Activated naive CD4-positive, alpha-beta T cell treated with anti-CD3 and anti-CD28 coated beads for 36 hours (primary cell): ENCODE measurements at regions of chr5 and their contacts with region 1.

Region 1: GRCh38 chr5:91162534-91163381 is 220.4 kb downstream of the ARRDC3 start:
- DNase-seq: peak; percentile 89
- H3K4me3 Mint-ChIP-seq: no peak overlapping the region
- H3K27ac Mint-ChIP-seq: peak overlapping the region; percentile 65
- H3K4me1 Mint-ChIP-seq: peaks cover 22% of the 10 kb centered on the region
- H3K27me3 Mint-ChIP-seq: no peaks in the 10 kb centered on the region

Region 2: GRCh38 chr5:90409318-90410177 is 753.2 kb before region 1 on chr5 and contains the start of gene CETN3:
- CTCF ChIA-PET with region 1: no interaction called
- intact Hi-C with region 1: loop called (anchors 10 kb)
- DNase-seq: peak; percentile 93
- H3K4me3 Mint-ChIP-seq: no peak within 1 kb of the TSS
- H3K27ac Mint-ChIP-seq: no peak within 1 kb of the TSS
- H3K4me1 Mint-ChIP-seq: peaks cover 15% of the 10 kb centered on the region
- H3K27me3 Mint-ChIP-seq: no peaks in the 10 kb centered on the region
- total RNA-seq, gene CETN3: 41.9 to 45.3 TPM

Region 3: GRCh38 chr5:90675222-90675621 is 487.5 kb before region 1 on chr5:
- CTCF ChIA-PET with region 1: no interaction called
- intact Hi-C with region 1: no loop called
- DNase-seq: no peak
- H3K4me3 Mint-ChIP-seq: no peak overlapping the region
- H3K27ac Mint-ChIP-seq: no peak overlapping the region
- H3K4me1 Mint-ChIP-seq: no peaks in the 10 kb centered on the region
- H3K27me3 Mint-ChIP-seq: peaks cover 4% of the 10 kb centered on the region

Region 4: DNA sequence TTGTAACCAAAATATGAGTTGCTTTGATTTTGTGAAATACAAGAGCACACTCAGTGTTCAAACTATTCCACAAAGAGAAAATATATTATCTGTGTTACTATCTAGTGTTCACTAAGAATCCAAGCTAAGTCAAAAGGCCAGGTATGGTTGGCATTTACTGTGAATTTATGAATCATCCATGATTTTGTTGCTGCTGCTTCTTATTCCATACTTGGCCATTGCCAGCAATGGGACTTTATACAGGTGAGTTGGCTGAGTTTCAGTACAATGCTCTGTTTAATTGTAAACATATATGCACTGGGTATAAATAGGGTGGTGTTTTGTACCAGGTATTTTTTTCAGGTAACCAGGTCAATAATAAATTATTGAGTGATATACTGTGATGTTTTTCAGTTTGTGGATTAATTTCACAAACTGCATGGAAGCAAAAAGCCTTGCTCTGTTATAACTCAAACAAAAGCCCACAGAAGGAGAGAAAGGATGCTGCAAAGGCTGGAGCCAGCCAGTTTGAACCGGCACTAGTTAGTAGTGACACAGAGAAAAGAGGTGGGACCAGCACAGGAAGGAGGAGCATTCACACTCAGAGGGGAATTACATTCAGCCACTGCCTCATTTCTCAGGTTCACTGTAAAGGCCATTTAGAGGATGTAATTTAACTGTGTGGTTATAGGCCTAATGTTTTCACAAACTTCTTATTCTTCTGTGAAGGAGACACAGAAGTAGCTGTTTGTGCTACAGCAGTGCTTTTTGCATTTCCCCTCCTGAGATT is 222.3 kb before region 1 on chr5:
- CTCF ChIA-PET with region 1: no interaction called
- intact Hi-C with region 1: loop called (anchors 1 kb)
- DNase-seq: peak; percentile 88
- H3K4me3 Mint-ChIP-seq: no peak overlapping the region
- H3K27ac Mint-ChIP-seq: peak overlapping the region; percentile 73
- H3K4me1 Mint-ChIP-seq: peaks cover 13% of the 10 kb centered on the region
- H3K27me3 Mint-ChIP-seq: no peaks in the 10 kb centered on the region

Region 5: DNA sequence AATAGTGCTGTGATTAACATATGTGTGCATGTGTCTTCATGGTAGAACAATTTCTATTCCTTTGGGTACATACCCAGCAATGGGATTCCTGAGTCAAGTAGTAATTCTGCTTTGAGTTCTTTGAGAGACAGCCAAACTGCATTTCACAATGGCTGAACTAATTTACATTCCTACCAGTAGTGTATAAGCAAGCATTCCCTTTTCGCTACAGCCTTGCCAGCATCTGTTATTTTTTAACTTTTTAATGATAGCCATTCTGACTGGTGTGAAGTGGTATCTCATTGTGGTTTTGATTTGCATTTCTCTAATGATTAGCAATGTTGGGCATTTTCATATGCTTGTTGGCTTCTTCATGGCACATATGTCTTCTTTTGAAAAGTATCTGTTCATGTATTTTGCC is 88.1 kb before region 1 on chr5:
- CTCF ChIA-PET with region 1: no interaction called
- intact Hi-C with region 1: loop called (anchors 5 kb)
- DNase-seq: no peak
- H3K4me3 Mint-ChIP-seq: no peak overlapping the region
- H3K27ac Mint-ChIP-seq: no peak overlapping the region
- H3K4me1 Mint-ChIP-seq: peaks cover 18% of the 10 kb centered on the region
- H3K27me3 Mint-ChIP-seq: peaks cover 20% of the 10 kb centered on the region

Region 6: GRCh38 chr5:91126448-91126847 is 36.3 kb before region 1 on chr5:
- CTCF ChIA-PET with region 1: no interaction called
- intact Hi-C with region 1: no loop called
- DNase-seq: no peak
- H3K4me3 Mint-ChIP-seq: no peak overlapping the region
- H3K27ac Mint-ChIP-seq: no peak overlapping the region
- H3K4me1 Mint-ChIP-seq: no peaks in the 10 kb centered on the region
- H3K27me3 Mint-ChIP-seq: no peaks in the 10 kb centered on the region

Region 7: GRCh38 chr5:91183737-91184136 is 21.0 kb after region 1 on chr5:
- CTCF ChIA-PET with region 1: no interaction called
- intact Hi-C with region 1: loop called (anchors 1 kb)
- DNase-seq: no peak
- H3K4me3 Mint-ChIP-seq: no peak overlapping the region
- H3K27ac Mint-ChIP-seq: no peak overlapping the region
- H3K4me1 Mint-ChIP-seq: peaks cover 9% of the 10 kb centered on the region
- H3K27me3 Mint-ChIP-seq: peaks cover 10% of the 10 kb centered on the region

Region 8: DNA sequence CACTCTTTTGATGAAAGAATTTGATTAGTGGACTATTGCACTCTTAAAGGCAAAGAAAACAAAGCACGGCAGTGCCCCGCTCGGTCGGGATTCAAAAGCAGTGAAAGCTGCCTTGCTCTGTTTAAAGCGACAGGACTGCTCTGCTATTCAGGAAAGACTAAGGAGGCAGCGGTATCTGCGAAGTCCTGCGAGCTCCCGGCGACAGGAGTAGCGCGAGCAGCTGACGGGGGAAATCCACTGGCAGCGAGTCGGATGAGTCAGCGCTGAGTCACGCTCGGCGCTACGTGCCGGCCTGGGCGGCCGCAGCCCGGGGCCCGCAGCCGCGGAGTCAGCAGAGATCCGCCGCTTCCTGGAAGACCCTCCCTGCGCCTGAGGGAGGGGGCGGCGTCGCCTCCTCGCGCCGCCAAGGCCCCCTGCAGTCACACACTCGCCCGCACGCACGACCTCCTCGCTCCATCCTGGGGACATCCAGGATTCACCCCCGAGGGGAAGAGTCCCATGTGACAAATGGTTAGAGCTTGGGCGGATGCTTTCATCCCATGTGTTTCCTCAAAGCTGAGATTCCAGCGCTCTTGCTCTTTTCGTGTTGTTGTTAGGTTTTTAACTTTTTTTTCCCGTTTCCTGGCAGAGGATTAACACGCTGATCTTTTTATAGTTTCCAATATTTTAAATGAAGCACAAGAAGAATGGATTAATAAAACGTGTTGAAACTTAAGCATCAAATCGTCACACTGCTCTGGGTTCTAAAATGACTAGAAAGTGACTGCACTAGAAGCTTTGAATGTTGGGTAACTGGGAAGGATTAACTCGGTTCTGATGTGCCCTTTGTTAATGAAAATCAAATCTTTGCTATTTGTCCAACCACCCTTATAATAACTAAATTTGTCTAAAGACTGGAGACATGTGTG is 117.9 kb after region 1 on chr5:
- CTCF ChIA-PET with region 1: no interaction called
- intact Hi-C with region 1: loop called (anchors 1 kb)
- DNase-seq: peak; percentile 94
- H3K4me3 Mint-ChIP-seq: peak overlapping the region; percentile 73
- H3K27ac Mint-ChIP-seq: peak overlapping the region; percentile 87
- H3K4me1 Mint-ChIP-seq: peaks cover 42% of the 10 kb centered on the region
- H3K27me3 Mint-ChIP-seq: no peaks in the 10 kb centered on the region